ENCODE measurements at regions of chr1 and their contacts with region 1.

Region 1: GRCh38 chr1:85048296-85049064 is at the start of gene MCOLN3:
- DNase-seq: peak in 11 of 14 experiments; percentile 14 to 60 (median 36)
- ATAC-seq: peak; percentile 63
- H3K4me3 ChIP-seq: peak within 1 kb of the TSS; percentile 49
- H3K4me3 Mint-ChIP-seq: peak within 1 kb of the TSS; percentile 72
- H3K27ac ChIP-seq: no peak within 1 kb of the TSS
- H3K27ac Mint-ChIP-seq: no peak within 1 kb of the TSS
- H3K4me1 ChIP-seq: peaks cover 26% of the 10 kb centered on the region
- H3K4me1 Mint-ChIP-seq: peaks cover 33% of the 10 kb centered on the region
- H3K27me3 ChIP-seq: peaks cover 33 to 56% of the 10 kb centered on the region in 2 experiments
- H3K27me3 Mint-ChIP-seq: peaks cover 66% of the 10 kb centered on the region
- CTCF ChIP-seq: no peak
- total RNA-seq, gene MCOLN3: 0.14 to 0.22 TPM

Region 2: DNA sequence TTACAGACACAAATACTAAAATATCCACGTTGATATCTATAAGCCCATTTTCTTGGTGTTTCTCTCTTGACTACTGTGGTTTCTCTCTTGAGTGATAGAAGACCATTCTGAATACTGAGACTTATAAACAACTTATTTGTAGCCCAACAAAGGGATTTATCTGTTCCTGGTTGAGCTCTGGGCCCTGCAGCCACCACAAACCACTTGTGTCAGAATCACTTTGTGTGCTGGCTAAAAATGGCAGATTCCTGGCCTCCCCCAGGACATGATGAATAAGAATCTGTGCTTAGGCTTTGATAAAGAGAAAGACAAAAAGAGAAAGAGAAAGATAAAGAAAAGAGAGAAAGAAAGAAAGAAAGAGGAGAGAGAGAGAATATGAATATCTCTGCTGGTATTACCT is 32.7 kb before region 1 on chr1:
- CTCF ChIA-PET with region 1: no interaction called
- POLR2A ChIA-PET with region 1: no interaction called
- intact Hi-C with region 1: loop called in 1 of 2 experiments (anchors 1 kb)
- DNase-seq: no peak
- ATAC-seq: no peak
- H3K4me3 ChIP-seq: no peak overlapping the region
- H3K4me3 Mint-ChIP-seq: no peak overlapping the region
- H3K27ac ChIP-seq: no peak overlapping the region
- H3K27ac Mint-ChIP-seq: no peak overlapping the region
- H3K4me1 ChIP-seq: no peaks in the 10 kb centered on the region
- H3K4me1 Mint-ChIP-seq: no peaks in the 10 kb centered on the region
- H3K27me3 ChIP-seq: no peaks in the 10 kb centered on the region
- H3K27me3 Mint-ChIP-seq: peaks cover 8% of the 10 kb centered on the region
- CTCF ChIP-seq: no peak

Measured in CD4-positive, alpha-beta T cell (primary cell).